Caki2 (cell line): ENCODE measurements at regions of chr7 and their contacts with region 1.

Region 1: GRCh38 chr7:6317797-6318438 is 45.5 kb upstream of the CYTH3 start:
- DNase-seq: no peak

Region 2: GRCh38 chr7:6148724-6149360 is 169.1 kb before region 1 on chr7:
- in situ Hi-C with region 1: loop called (anchors 10 kb)
- DNase-seq: no peak